ENCODE measurements at regions of chr3 and their contacts with region 1.

Region 1: GRCh38 chr3:10666621-10667020 is 149.4 kb upstream of the SLC6A11 start:
- DNase-seq: no peak
- H3K4me3 ChIP-seq: no peak overlapping the region
- H3K27ac ChIP-seq: no peak overlapping the region
- H3K4me1 ChIP-seq: no peaks in the 10 kb centered on the region
- H3K27me3 ChIP-seq: no peaks in the 10 kb centered on the region
- CTCF ChIP-seq: no peak
- POLR2A ChIP-seq: no peak

Region 2: GRCh38 chr3:10644189-10644588 is 22.4 kb before region 1 on chr3:
- CTCF ChIA-PET with region 1: no interaction called
- POLR2A ChIA-PET with region 1: no interaction called
- dilution Hi-C with region 1: no loop called
- intact Hi-C with region 1: loop called (anchors 1 kb)
- DNase-seq: no peak
- H3K4me3 ChIP-seq: no peak overlapping the region
- H3K27ac ChIP-seq: no peak overlapping the region
- H3K4me1 ChIP-seq: no peaks in the 10 kb centered on the region
- H3K27me3 ChIP-seq: no peaks in the 10 kb centered on the region
- CTCF ChIP-seq: no peak
- POLR2A ChIP-seq: no peak